MCF 10A (cell line): ENCODE measurements at regions of chr13 and their contacts with region 1.

Region 1: DNA sequence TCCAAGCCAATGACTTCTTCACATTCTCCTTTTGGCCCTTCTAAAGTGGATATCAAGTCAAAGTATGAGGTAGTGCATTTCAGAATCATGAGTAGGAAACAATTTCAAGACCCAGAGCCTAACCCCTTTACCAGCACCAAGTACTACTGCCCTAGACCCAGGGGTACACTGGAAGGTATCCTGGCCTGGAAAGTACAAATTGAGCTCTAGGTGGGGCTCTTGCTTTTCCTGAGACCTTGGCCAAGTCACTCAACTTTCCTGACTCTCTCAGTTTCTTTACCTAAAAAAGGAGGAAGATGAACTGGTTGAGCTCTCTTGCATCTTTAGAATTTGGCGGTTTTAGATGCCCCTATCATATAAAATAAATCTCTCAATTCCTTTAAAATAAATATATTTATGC is 204.7 kb downstream of the FGF14 start:
- DNase-seq: peak; percentile 57
- H3K4me3 Mint-ChIP-seq: no peak overlapping the region
- H3K27ac Mint-ChIP-seq: no peak overlapping the region
- H3K4me1 Mint-ChIP-seq: peaks cover 37% of the 10 kb centered on the region
- H3K27me3 Mint-ChIP-seq: no peaks in the 10 kb centered on the region
- CTCF ChIP-seq: peak; percentile 37

Region 2: DNA sequence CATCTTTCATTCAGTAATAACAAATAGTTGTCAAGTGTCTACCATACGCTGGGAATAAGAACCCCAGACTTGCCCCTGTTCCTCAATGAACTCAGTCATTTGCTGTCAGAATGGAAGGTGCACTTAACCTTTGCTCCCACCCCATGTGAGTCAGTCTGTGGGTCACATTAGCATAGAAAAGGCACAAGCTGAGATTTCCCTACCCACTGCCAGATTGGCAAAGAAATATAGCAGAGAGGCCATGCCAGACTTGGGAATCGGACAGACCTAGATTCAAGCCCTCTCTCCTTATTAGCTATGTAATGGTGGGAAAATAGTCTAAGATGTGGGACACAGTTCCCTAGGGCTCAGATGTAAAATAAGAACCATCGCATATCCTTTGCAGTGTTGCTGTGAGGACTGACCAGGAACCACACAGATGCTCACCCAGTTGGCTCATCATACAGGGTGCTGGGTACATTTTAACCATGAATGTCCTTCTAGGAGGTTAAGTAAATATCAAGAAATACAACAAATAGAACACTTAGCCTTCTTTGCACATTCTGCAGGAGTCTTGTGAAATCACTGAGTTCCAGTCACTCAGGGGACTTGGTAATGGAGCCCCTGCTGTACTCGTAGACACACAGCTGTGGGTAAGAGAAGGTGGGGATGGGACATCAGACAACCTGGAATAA is 13.5 kb before region 1 on chr13:
- CTCF ChIA-PET with region 1: no interaction called
- POLR2A ChIA-PET with region 1: no interaction called
- intact Hi-C with region 1: no loop called
- DNase-seq: no peak
- H3K4me3 Mint-ChIP-seq: no peak overlapping the region
- H3K27ac Mint-ChIP-seq: no peak overlapping the region
- H3K4me1 Mint-ChIP-seq: no peaks in the 10 kb centered on the region
- H3K27me3 Mint-ChIP-seq: no peaks in the 10 kb centered on the region
- CTCF ChIP-seq: no peak

Region 3: DNA sequence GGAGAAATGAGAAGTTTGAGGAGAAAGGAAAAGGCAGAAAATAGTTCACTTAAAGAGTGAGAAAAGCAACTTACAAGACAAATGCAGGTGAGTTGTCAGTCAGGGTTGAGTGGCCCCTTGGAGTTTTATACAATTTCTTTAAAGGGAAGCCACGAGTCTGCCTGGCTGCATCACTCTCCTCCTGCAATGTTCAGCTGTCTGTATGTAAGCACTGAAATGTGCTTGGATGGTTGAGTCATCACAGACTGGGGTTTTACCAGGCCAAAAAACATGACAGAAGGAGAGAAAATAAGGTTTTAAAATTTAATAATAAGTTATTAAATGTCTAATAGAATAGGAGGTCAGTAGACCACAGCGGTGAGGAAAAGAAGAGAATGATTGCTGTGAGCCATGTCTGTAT is 255.6 kb after region 1 on chr13:
- CTCF ChIA-PET with region 1: interaction called, 10 read pairs
- POLR2A ChIA-PET with region 1: no interaction called
- intact Hi-C with region 1: loop called (anchors 1 kb)
- DNase-seq: no peak
- H3K4me3 Mint-ChIP-seq: no peak overlapping the region
- H3K27ac Mint-ChIP-seq: no peak overlapping the region
- H3K4me1 Mint-ChIP-seq: peaks cover 13% of the 10 kb centered on the region
- H3K27me3 Mint-ChIP-seq: no peaks in the 10 kb centered on the region
- CTCF ChIP-seq: no peak

Region 4: DNA sequence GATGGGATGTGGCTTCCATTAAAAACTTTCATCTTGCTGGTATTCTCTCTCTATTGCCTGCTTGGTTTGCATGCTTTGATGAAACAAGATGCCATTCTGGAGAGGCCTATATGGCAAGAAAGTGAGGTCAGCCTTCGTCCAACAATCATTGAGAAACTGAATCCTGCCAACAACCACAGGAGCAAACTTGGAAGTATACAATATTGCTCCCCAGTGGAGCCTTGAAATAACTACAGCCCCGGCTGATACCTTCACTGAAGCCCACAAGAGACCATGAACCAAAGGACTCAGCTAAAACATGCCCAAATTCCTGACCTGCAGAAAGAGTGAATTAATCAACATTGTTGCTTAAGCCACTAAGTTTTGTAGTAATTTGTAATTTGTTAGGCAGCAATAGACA is 287.1 kb after region 1 on chr13:
- CTCF ChIA-PET with region 1: no interaction called
- POLR2A ChIA-PET with region 1: no interaction called
- intact Hi-C with region 1: loop called (anchors 1 kb)
- DNase-seq: peak; percentile 38
- H3K4me3 Mint-ChIP-seq: no peak overlapping the region
- H3K27ac Mint-ChIP-seq: no peak overlapping the region
- H3K4me1 Mint-ChIP-seq: no peaks in the 10 kb centered on the region
- H3K27me3 Mint-ChIP-seq: no peaks in the 10 kb centered on the region
- CTCF ChIP-seq: peak; percentile 21